Transverse colon (tissue), 4 donors: ENCODE measurements at regions of chr5 and their contacts with region 1.

Region 1: GRCh38 chr5:120516805-120517204 is 52.7 kb downstream of the PRR16 start:
- DNase-seq: no peak
- H3K4me3 ChIP-seq: no peak overlapping the region
- H3K27ac ChIP-seq: no peak overlapping the region
- H3K4me1 ChIP-seq: no peaks in the 10 kb centered on the region
- H3K27me3 ChIP-seq: no peaks in the 10 kb centered on the region
- CTCF ChIP-seq: no peak
- EP300 ChIP-seq: no peak
- POLR2A ChIP-seq: no peak

Region 2: GRCh38 chr5:120372899-120373298 is 143.9 kb before region 1 on chr5:
- in situ Hi-C with region 1: no loop called
- intact Hi-C with region 1: loop called (anchors 5 kb)
- DNase-seq: no peak
- H3K4me3 ChIP-seq: no peak overlapping the region
- H3K27ac ChIP-seq: no peak overlapping the region
- H3K4me1 ChIP-seq: peaks cover 0 to 4% (median 4%) of the 10 kb centered on the region in 4 donors
- H3K27me3 ChIP-seq: no peaks in the 10 kb centered on the region
- CTCF ChIP-seq: no peak
- EP300 ChIP-seq: no peak
- POLR2A ChIP-seq: no peak